ENCODE measurements at regions of chr13 and their contacts with region 1.

Region 1: GRCh38 chr13:46523972-46524752 is 28.8 kb upstream of the LRCH1 start:
- DNase-seq: peak; percentile 40
- H3K4me3 ChIP-seq: no peak overlapping the region
- H3K27ac ChIP-seq: no peak overlapping the region
- H3K4me1 ChIP-seq: peaks cover 8% of the 10 kb centered on the region
- H3K27me3 ChIP-seq: no peaks in the 10 kb centered on the region
- CTCF ChIP-seq: no peak

Region 2: DNA sequence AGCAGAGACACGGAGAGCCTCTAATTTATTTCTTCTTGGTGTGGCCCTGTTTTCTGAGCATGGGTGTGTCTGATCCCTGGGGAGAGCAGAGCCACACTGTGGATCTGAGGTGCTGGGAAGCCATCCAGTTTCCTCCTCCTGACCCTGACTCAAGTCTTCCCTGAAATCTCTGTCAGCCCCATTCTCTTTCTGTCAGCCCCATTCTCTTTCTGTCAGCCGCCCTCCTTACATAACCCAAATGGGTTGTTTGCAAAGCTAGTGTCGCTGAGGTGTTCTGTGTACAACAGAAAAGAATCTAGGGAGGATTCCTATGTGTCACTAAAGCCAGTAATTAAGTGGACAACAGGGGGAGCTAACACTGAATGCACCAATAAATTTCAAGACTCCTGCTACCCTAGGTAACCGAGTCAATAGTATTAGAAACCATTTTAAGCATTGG is 79.0 kb after region 1 on chr13:
- CTCF ChIA-PET with region 1: no interaction called
- POLR2A ChIA-PET with region 1: interaction called, 16 read pairs
- intact Hi-C with region 1: no loop called
- DNase-seq: no peak
- H3K4me3 ChIP-seq: no peak overlapping the region
- H3K27ac ChIP-seq: no peak overlapping the region
- H3K4me1 ChIP-seq: peaks cover 61% of the 10 kb centered on the region
- H3K27me3 ChIP-seq: no peaks in the 10 kb centered on the region
- CTCF ChIP-seq: peak; percentile 54

Region 3: GRCh38 chr13:46656786-46657185 is 132.6 kb after region 1 on chr13:
- CTCF ChIA-PET with region 1: no interaction called
- POLR2A ChIA-PET with region 1: no interaction called
- intact Hi-C with region 1: no loop called
- DNase-seq: no peak
- H3K4me3 ChIP-seq: no peak overlapping the region
- H3K27ac ChIP-seq: peak overlapping the region; percentile 88
- H3K4me1 ChIP-seq: peaks cover 64% of the 10 kb centered on the region
- H3K27me3 ChIP-seq: no peaks in the 10 kb centered on the region
- CTCF ChIP-seq: no peak

Measured in A673 (cell line).